PC-3 (cell line): ENCODE measurements at regions of chr11 and their contacts with region 1.

Region 1: DNA sequence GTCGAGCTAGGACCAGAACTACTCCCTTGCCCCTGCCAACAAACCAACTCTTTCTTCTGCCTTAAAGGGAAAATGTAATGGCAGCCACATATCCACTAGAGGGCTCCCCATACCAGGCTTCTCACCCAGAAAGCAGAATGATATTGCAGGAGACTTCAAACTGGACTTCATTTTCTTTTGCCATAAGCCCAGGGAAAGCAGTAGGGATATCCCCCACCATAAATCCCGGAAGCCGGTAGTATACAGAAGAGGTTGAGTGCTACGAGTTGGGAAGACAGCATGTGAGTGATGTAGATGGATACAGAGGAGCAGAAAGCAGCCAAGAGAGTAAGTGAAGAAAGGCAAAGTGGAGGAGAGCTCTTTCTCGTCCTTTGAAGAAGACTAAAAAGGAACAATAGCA is 12.1 kb downstream of the PLAAT5 start:
- DNase-seq: peak; percentile 86
- ATAC-seq: peak; percentile 82
- H3K4me3 ChIP-seq: no peak overlapping the region
- H3K27ac ChIP-seq: no peak overlapping the region
- H3K4me1 ChIP-seq: 0 out of 2 replicates have a peak, but pooled peaks cover 6% of the 10 kb centered on the region
- H3K27me3 ChIP-seq: no peaks in the 10 kb centered on the region
- CTCF ChIP-seq: peak; percentile 98

Region 2: DNA sequence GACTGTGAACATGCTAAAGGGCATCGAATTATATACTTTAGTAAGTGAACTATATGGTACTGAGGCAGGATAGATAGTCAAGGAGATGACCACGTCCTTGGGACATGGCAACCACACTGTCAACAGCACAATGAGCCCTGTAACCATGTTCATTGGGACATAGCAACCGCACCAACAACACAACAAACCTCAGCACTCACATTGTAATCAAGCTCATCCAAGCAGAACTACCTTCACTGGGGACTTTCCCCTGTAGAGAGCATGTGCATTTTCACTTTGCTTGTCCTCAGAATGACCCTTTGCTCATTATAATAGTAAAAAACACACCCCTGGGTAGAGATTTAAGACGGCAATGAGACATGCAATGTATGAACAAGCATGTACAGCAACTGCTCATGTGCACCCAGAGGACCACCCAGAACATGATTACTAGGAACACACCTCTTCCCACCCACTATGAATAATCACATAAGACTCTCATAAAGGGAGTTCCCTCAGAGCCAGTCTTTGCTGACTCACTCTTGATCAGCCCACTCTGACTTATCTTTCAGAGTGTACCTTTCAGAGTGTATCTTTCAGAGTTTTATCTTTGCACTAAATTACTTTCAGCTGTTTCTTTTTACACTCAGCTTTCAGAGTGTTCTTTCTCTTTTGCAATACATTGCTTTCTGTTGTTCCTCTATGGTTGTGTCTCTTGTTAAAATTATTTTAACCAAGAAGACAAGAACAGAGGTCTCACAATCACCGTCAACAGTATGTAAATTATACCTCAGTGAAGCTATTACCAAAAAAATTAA is 88.3 kb after region 1 on chr11:
- CTCF ChIA-PET with region 1: no interaction called
- POLR2A ChIA-PET with region 1: no interaction called
- intact Hi-C with region 1: loop called (anchors 2 kb)
- DNase-seq: peak; percentile 97
- ATAC-seq: peak; percentile 85
- H3K4me3 ChIP-seq: peak overlapping the region; percentile 41
- H3K27ac ChIP-seq: peak overlapping the region; percentile 93
- H3K4me1 ChIP-seq: peaks cover 39% of the 10 kb centered on the region
- H3K27me3 ChIP-seq: no peaks in the 10 kb centered on the region
- CTCF ChIP-seq: no peak

Region 3: DNA sequence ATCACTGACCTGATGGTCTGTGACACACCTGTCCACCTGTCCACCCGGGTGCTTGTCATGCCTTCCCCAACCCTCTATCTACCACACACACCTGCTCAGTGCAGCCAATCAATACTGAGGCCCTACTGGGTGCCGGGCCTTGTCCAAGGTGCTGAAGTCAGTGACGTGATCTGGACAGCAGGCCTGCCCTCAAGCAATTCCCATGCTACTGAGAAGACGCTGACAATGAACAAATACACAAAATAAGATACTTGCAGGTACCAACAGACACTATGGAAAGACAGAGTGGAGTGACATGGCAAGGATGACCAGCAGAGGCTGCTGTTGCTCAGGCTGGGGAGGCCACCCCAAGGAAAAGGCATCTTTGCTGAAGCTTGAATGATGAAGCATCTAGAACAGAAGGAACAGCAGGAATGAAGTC is 114.1 kb after region 1 on chr11:
- CTCF ChIA-PET with region 1: no interaction called
- POLR2A ChIA-PET with region 1: no interaction called
- intact Hi-C with region 1: loop called (anchors 1 kb)
- DNase-seq: peak; percentile 61
- ATAC-seq: peak; percentile 84
- H3K4me3 ChIP-seq: no peak overlapping the region
- H3K27ac ChIP-seq: no peak overlapping the region
- H3K4me1 ChIP-seq: no peaks in the 10 kb centered on the region
- H3K27me3 ChIP-seq: no peaks in the 10 kb centered on the region
- CTCF ChIP-seq: peak; percentile 87

Region 4: GRCh38 chr11:63738720-63739360 is 259.9 kb after region 1 on chr11:
- CTCF ChIA-PET with region 1: no interaction called
- POLR2A ChIA-PET with region 1: no interaction called
- intact Hi-C with region 1: loop called (anchors 5 kb)
- DNase-seq: peak; percentile 96
- ATAC-seq: peak; percentile 73
- H3K4me3 ChIP-seq: no peak overlapping the region
- H3K27ac ChIP-seq: no peak overlapping the region
- H3K4me1 ChIP-seq: no peaks in the 10 kb centered on the region
- H3K27me3 ChIP-seq: no peaks in the 10 kb centered on the region
- CTCF ChIP-seq: peak; percentile 85